Activated CD4-positive, alpha-beta memory T cell treated with anti-CD3 and anti-CD28 coated beads for 36 hours (primary cell): ENCODE measurements at regions of chr14 and their contacts with region 1.

Region 1: GRCh38 chr14:94136575-94137331 is 7.3 kb upstream of the IFI27L2 start:
- DNase-seq: peak; percentile 93
- H3K4me3 Mint-ChIP-seq: no peak overlapping the region
- H3K27ac Mint-ChIP-seq: no peak overlapping the region
- H3K4me1 Mint-ChIP-seq: peaks cover 3% of the 10 kb centered on the region
- H3K27me3 Mint-ChIP-seq: no peaks in the 10 kb centered on the region

Region 2: DNA sequence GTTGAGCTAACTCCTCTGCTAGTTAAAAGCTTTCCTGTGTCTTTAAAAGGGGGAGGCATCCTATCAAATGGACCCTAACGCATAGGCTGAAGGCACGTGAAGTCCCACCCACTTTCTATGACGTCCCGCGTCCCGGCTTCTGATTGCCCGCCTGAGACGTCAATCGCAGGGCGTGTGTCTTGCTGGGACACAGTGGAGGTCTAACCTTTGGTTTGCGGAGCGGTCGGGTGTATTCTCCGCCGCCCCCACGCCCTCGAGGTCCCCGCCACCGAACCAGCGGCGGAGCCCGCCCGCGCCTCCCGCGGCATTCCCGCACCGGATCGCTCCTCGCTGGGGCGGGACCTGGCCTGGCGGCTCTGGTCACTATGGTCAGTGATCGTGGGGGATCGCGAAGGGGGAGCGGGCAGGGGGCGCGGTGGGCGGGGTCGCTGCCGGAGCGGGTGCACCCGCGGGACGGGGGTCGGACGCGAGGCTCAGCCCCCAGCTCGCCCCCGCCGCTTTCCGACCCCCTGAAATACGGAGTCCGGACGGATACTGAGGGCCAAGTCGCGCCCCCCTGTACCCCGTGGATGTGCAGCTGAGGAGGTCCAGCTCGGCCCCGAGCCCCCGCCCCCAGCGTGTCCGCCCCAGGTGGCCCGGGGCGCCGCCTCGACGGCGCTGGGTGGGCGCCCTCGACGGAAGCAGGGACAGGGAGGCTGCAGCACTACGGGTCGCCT is 110.4 kb before region 1 on chr14 and contains the start of gene OTUB2:
- CTCF ChIA-PET with region 1: interaction called, 17 read pairs
- POLR2A ChIA-PET with region 1: no interaction called
- intact Hi-C with region 1: no loop called
- DNase-seq: peak; percentile 99
- H3K4me3 Mint-ChIP-seq: peak within 1 kb of the TSS; percentile 64
- H3K27ac Mint-ChIP-seq: no peak within 1 kb of the TSS
- H3K4me1 Mint-ChIP-seq: peaks cover 43% of the 10 kb centered on the region
- H3K27me3 Mint-ChIP-seq: no peaks in the 10 kb centered on the region
- total RNA-seq, gene OTUB2: 2.0 to 2.9 TPM

Region 3: DNA sequence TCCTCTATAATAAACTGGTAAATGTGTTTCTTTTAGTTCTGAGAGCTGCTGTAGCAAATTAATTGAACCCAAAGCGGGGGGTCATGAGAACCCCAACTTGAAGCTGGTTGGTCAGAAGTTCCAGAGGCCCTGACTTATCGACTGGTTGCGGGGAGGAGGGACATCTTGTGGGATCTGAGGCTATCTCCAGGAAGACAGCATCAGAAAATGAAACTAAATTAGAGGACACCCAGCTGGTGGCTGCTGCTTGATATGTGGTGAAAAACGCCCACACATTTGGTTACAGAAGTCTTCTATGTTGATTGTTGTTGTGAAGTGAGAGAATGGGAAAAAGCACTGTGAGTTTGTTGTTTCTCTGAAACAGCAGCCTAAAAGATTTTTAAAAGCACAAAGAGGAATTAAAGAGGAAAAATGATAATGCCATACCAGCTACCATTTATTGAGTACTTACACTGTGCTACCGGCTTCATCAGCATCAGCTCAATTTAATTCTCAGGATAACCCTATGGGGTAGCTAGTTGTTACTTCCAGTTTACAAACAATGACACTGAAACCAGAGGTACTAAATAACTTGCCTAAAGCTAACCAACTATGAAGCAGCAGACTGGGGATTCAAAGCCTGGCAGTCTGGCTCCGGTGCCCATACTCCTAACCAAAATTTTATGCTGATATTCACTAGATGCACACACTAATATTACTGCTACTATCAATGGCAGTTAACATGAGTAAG is 80.0 kb before region 1 on chr14:
- CTCF ChIA-PET with region 1: interaction called, 32 read pairs
- POLR2A ChIA-PET with region 1: interaction called, 3 read pairs
- intact Hi-C with region 1: no loop called
- DNase-seq: peak; percentile 57
- H3K4me3 Mint-ChIP-seq: no peak overlapping the region
- H3K27ac Mint-ChIP-seq: peak overlapping the region; percentile 71
- H3K4me1 Mint-ChIP-seq: peaks cover 72% of the 10 kb centered on the region
- H3K27me3 Mint-ChIP-seq: no peaks in the 10 kb centered on the region

Region 4: DNA sequence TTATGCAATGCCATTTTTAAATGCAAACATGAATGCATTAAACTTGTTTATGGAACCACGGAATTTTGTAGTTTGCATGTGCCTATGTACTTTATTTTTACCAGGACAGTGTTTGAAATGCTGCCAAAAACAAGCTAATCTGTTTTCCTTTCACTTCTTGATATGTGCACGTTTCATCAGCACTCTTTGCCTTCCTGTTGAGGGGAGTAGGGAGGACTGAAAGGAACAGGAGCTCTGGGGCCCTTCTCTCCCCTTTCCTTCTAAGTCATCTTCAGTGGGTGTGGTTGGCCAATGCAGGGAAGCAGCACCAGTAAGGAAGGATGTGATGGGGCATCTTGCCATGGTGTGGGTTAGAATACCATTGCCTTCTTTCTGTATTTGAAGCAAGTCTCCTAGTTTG is 25.2 kb after region 1 on chr14:
- CTCF ChIA-PET with region 1: interaction called, 18 read pairs
- POLR2A ChIA-PET with region 1: no interaction called
- intact Hi-C with region 1: loop called (anchors 2 kb)
- DNase-seq: peak; percentile 32
- H3K4me3 Mint-ChIP-seq: no peak overlapping the region
- H3K27ac Mint-ChIP-seq: peak overlapping the region; percentile 55
- H3K4me1 Mint-ChIP-seq: peaks cover 81% of the 10 kb centered on the region
- H3K27me3 Mint-ChIP-seq: no peaks in the 10 kb centered on the region

Region 5: GRCh38 chr14:94307410-94307992 is 170.7 kb after region 1 on chr14:
- CTCF ChIA-PET with region 1: interaction called, 11 read pairs
- POLR2A ChIA-PET with region 1: no interaction called
- intact Hi-C with region 1: loop called (anchors 10 kb)
- DNase-seq: no peak
- H3K4me3 Mint-ChIP-seq: no peak overlapping the region
- H3K27ac Mint-ChIP-seq: no peak overlapping the region
- H3K4me1 Mint-ChIP-seq: no peaks in the 10 kb centered on the region
- H3K27me3 Mint-ChIP-seq: peaks cover 7% of the 10 kb centered on the region

Region 6: DNA sequence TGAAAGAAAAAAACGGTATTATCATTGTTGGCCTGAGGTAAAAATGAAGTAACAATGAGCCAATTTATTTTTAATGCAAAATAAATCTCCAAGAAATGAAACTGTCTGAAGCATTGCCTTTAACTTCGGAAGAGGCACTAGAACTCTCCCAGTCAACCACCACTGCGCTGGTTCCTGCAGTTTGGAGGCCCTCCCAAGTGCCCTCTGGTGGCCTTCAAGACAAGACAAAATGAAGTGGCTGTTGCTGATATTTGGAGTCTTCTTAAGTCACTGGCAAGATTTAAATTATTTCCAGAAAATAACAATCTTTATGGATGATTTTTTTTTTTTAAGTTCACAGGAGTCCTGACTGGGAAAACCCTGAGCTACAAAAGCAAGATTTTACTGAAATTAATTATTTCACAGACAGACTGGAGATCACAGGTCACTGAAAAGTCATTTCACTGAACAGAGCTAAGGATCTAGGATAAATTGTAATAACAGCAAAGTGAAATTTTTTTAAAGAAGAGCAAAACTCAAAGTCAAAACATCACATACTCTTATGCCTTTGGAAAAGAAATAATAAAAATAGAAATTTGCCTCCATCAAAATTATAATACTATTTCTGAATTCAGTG is 962.3 kb after region 1 on chr14:
- CTCF ChIA-PET with region 1: no interaction called
- POLR2A ChIA-PET with region 1: no interaction called
- intact Hi-C with region 1: no loop called
- DNase-seq: peak; percentile 46
- H3K4me3 Mint-ChIP-seq: no peak overlapping the region
- H3K27ac Mint-ChIP-seq: no peak overlapping the region
- H3K4me1 Mint-ChIP-seq: peaks cover 11% of the 10 kb centered on the region
- H3K27me3 Mint-ChIP-seq: no peaks in the 10 kb centered on the region